ENCODE measurements at regions of chr3 and their contacts with region 1.

Region 1: GRCh38 chr3:194486540-194487288 is at the start of gene ATP13A3:
- DNase-seq: peak; percentile 92
- H3K4me3 Mint-ChIP-seq: peak within 1 kb of the TSS; percentile 92
- H3K27ac Mint-ChIP-seq: peak within 1 kb of the TSS; percentile 95
- H3K4me1 Mint-ChIP-seq: peaks cover 58% of the 10 kb centered on the region
- H3K27me3 Mint-ChIP-seq: no peaks in the 10 kb centered on the region
- total RNA-seq, gene ATP13A3: 136 to 145 TPM

Region 2: DNA sequence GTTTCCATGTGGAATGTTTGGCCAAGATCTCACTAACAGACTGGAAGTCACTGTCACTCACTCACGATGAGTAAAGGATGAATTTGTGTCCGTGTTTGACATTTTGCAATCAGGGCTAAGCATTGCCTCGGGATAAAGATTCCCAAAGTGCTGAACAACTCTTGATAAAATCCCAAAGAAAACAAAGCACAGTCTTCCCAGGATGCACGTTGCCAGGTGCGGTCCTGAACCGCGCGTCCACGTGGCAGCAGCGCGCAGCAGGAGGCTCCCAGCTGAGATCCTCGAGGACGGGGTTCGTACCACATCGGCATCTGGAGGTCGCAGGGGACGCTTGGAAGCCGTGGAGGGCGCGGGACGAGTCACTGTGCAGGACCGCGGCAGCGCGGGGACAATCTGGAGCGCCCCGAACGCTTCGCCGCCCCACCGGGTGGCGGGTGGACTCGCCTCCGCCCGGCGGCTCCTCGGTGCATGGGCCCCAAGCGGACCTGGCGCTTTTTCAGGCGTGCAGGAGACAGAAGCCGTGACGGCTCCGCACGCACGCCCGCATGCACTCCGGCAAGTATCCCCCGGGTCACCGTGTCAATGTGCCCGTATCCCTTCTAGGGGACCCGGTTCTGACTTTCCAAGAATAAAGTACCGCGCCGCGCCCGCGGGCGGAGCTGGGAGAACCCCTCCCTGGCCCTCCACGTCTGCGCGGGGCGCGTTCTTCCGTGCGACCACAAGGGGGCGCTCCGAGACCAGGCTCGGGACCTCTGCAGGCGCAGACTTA is 153.3 kb before region 1 on chr3:
- CTCF ChIA-PET with region 1: no interaction called
- POLR2A ChIA-PET with region 1: no interaction called
- intact Hi-C with region 1: no loop called
- DNase-seq: peak; percentile 92
- H3K4me3 Mint-ChIP-seq: peak overlapping the region; percentile 65
- H3K27ac Mint-ChIP-seq: no peak overlapping the region
- H3K4me1 Mint-ChIP-seq: peaks cover 5% of the 10 kb centered on the region
- H3K27me3 Mint-ChIP-seq: peaks cover 25% of the 10 kb centered on the region

Region 3: DNA sequence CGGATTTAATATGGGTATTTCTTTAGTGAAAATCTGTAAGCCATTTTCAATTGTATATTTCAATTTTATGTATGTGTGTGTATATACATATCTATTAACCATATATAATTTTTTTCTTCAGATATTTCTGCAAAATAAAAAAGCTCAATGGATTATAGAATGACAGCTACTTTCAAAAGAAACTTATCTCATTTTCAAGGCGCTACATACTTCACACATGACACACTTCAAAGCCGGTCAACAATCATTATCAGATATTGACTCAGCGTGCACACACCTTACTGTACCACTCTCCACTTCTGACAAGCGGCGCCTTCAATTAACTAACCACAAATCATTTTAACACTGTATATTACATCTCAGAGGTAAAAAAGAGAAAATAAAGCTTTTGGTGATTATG is 39.6 kb before region 1 on chr3:
- CTCF ChIA-PET with region 1: no interaction called
- POLR2A ChIA-PET with region 1: no interaction called
- intact Hi-C with region 1: no loop called
- DNase-seq: peak; percentile 19
- H3K4me3 Mint-ChIP-seq: no peak overlapping the region
- H3K27ac Mint-ChIP-seq: no peak overlapping the region
- H3K4me1 Mint-ChIP-seq: peaks cover 4% of the 10 kb centered on the region
- H3K27me3 Mint-ChIP-seq: no peaks in the 10 kb centered on the region

Region 4: GRCh38 chr3:194472290-194472920 is 14.3 kb before region 1 on chr3:
- CTCF ChIA-PET with region 1: interaction called, 37 read pairs
- POLR2A ChIA-PET with region 1: interaction called, 4 read pairs
- intact Hi-C with region 1: no loop called
- DNase-seq: no peak
- H3K4me3 Mint-ChIP-seq: no peak overlapping the region
- H3K27ac Mint-ChIP-seq: no peak overlapping the region
- H3K4me1 Mint-ChIP-seq: peaks cover 23% of the 10 kb centered on the region
- H3K27me3 Mint-ChIP-seq: no peaks in the 10 kb centered on the region

Region 5: DNA sequence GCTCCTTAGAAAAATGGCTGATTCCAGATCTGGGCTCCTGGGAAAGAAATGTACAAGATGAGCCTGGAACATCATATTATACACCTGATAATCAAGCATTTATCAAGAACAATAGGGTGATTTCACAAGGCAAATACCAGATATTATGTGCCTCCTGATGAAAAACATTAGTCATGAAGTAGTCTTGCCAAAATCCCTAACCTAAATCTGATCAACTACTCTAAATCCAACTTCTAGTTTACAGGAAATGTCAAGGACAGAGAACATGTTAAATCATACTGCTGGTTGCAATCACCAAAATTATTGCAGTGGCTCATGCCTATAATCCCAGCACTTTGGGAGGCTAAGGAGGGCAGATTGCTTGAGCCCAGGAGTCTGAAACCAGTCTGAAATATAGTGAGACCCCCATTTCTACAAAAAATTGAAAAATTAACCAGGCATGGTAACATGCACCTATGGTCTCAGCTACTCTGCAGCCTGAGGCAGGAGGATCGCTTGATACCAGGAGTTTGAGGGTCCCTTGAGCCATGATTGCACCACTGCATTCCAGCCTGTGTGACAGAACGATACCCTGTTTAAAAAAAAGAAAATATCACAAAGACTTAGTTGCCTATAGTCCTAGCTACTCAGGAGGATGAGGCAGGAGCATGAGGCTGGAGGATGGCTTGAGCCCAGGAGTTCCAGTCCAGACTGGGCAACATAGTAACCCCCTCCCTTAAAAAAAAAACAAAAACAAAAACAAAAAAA is 35.0 kb after region 1 on chr3:
- CTCF ChIA-PET with region 1: interaction called, 4 read pairs
- POLR2A ChIA-PET with region 1: interaction called, 11 read pairs
- intact Hi-C with region 1: loop called (anchors 1 kb)
- DNase-seq: no peak
- H3K4me3 Mint-ChIP-seq: no peak overlapping the region
- H3K27ac Mint-ChIP-seq: no peak overlapping the region
- H3K4me1 Mint-ChIP-seq: peaks cover 41% of the 10 kb centered on the region
- H3K27me3 Mint-ChIP-seq: peaks cover 35% of the 10 kb centered on the region

Region 6: DNA sequence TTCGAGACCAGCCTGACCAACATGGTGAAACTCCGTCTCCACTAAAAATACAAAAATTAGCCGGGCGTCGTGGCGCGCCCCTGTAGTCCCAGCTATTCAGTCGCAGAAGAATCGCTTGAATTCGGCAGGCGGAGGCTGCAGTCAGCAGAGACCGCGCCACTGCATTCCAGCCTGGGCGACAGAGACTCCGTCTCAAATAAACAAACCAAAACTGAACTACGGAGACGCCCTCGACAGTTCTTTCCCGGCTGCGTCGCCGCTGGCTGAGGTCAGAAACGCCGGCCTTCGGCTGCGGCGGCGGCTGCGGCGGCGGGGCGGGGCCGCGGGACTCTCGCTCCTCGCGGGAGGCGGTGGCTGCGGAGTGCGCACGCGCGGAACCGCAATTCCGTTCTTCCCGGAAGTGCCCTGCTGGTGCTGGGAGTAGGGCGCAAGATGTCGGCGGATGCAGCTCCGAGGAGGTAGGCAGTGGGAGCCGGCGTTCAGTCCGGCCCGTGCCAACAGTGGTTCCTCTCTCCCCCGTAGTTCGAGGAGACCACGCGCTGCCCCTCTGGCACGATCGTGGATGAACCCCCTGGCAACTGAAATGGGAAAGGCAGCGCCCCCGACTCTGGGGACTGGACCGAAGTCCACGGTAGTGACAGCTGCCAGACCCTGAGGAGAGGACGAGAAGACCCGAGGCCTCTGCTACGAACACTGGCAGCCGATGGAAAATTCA is 97.0 kb after region 1 on chr3:
- CTCF ChIA-PET with region 1: interaction called, 4 read pairs
- POLR2A ChIA-PET with region 1: interaction called, 20 read pairs
- intact Hi-C with region 1: loop called (anchors 1 kb)
- DNase-seq: peak; percentile 96
- H3K4me3 Mint-ChIP-seq: peak overlapping the region; percentile 96
- H3K27ac Mint-ChIP-seq: peak overlapping the region; percentile 97
- H3K4me1 Mint-ChIP-seq: peaks cover 27% of the 10 kb centered on the region
- H3K27me3 Mint-ChIP-seq: no peaks in the 10 kb centered on the region